ENCODE measurements at regions of chr1 and their contacts with region 1.

Region 1: DNA sequence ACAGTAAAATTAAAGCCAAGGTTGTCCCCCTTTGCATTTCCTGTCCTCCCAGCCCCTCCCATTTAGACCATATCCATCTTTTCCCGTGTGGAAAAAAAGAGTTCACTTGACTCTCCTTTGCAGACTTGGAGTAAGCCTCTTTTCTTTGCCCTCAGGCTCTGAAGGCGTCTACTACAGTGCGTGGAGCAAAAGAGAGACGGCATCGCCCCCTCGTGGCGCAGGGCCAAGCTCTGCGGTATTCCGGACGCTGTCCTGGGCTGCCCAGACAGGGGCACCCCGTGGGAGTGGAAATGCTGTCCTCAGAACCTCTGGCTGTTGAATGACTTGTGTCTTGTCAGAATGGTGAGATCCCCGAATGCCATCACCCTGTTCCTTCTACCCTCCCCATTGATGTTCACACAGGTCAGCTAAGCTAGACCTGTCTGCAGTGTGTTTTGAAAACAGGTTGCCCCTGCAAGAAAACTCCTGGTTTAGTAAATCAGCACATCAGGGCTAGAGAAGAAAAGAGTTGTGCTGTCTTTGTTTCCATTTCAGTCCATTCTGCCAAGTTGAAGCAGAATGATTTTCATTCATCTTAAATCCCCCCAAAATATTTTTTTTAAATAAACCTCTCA is 12.3 kb upstream of the GJA8 start:
- DNase-seq: peak; percentile 78
- H3K4me3 ChIP-seq: no peak overlapping the region
- H3K27ac ChIP-seq: no peak overlapping the region
- H3K4me1 ChIP-seq: no peaks in the 10 kb centered on the region
- H3K27me3 ChIP-seq: no peaks in the 10 kb centered on the region
- CTCF ChIP-seq: peak; percentile 86 to 89
- POLR2A ChIP-seq: no peak

Region 2: DNA sequence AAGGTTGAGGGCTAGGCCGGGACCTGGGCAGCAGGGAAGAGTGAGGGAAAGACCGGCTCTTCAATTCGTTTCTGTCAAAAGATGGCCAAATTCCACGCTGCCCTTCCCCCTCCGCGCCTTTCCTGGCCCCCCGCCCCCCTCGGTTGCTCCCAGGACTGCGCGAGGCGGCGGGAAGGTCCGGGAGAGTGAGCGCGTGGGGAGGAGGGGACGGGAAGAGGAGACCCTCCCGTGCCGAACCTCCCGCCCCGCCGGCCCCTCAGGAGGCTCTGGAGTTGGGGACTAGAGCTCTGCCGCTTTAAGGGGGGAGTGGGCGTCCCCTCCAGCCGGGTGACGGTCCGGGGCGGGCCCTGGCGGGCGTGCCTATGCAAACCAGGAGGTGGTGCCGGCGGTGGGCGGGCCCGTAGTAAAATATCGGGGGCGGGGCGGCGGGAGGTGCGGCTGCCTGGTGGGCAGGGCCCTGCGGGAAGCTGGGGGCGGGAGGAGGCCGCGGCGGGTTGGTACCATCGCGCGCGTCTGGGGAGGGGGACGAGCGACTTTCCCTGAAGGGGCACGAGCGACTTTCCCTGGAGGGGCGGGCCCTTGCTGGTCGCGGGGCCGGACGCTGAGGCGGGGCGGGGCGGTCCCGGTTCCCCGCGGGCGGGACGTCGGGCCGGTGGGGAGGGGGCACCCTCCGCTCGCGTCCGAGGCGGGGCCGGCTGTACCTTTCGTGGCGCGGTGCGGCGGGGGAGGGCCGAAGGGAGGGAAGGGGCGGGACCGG is 290.7 kb before region 1 on chr1:
- CTCF ChIA-PET with region 1: interaction called, 9 read pairs
- POLR2A ChIA-PET with region 1: no interaction called
- dilution Hi-C with region 1: no loop called
- intact Hi-C with region 1: loop called (anchors 1 kb)
- DNase-seq: peak; percentile 98
- H3K4me3 ChIP-seq: peak overlapping the region; percentile 76 to 91 (median 78)
- H3K27ac ChIP-seq: no peak overlapping the region
- H3K4me1 ChIP-seq: peaks cover 13% of the 10 kb centered on the region
- H3K27me3 ChIP-seq: peaks cover 3 to 4% of the 10 kb centered on the region in 2 experiments
- CTCF ChIP-seq: no peak
- POLR2A ChIP-seq: no peak

Region 3: DNA sequence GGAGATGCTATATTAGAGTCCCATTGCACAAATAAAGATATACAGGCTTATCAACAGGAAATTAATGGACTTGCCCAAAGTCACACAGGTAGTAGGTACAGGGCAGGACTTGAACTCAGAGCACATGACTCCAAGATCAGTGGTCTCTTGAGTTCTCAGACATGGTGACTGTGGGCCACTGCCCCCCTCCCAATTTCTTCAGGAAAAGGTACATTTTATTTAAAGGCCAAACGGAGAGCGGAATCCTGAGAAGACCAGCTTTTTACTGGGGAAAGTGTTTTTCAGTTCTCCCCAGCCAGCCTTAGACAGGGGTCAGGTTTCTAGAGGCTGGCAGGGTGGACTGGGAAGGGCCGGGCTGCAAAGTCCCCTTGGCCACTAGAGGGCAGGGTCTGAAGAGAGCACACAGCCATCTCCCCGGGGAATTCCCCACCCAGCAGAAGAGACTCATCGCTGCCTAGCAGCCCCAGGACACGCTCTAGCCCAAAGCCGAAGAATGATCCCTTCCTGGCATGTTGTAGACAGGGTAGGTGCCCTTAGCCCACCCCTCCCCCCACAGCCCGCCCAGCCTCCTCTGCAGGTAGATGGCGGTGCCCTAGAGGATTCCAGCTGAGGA is 249.6 kb before region 1 on chr1:
- CTCF ChIA-PET with region 1: interaction called, 68 read pairs
- POLR2A ChIA-PET with region 1: no interaction called
- dilution Hi-C with region 1: no loop called
- intact Hi-C with region 1: loop called (anchors 1 kb)
- DNase-seq: peak; percentile 60
- H3K4me3 ChIP-seq: no peak overlapping the region
- H3K27ac ChIP-seq: no peak overlapping the region
- H3K4me1 ChIP-seq: no peaks in the 10 kb centered on the region
- H3K27me3 ChIP-seq: no peaks in the 10 kb centered on the region
- CTCF ChIP-seq: peak; percentile 94 to 96
- POLR2A ChIP-seq: no peak

Region 4: GRCh38 chr1:147717063-147717565 is 173.2 kb before region 1 on chr1:
- CTCF ChIA-PET with region 1: interaction called, 273 read pairs
- POLR2A ChIA-PET with region 1: no interaction called
- dilution Hi-C with region 1: no loop called
- intact Hi-C with region 1: no loop called
- DNase-seq: no peak
- H3K4me3 ChIP-seq: no peak overlapping the region
- H3K27ac ChIP-seq: no peak overlapping the region
- H3K4me1 ChIP-seq: no peaks in the 10 kb centered on the region
- H3K27me3 ChIP-seq: peaks cover 17 to 18% of the 10 kb centered on the region in 2 experiments
- CTCF ChIP-seq: no peak
- POLR2A ChIP-seq: no peak

Region 5: DNA sequence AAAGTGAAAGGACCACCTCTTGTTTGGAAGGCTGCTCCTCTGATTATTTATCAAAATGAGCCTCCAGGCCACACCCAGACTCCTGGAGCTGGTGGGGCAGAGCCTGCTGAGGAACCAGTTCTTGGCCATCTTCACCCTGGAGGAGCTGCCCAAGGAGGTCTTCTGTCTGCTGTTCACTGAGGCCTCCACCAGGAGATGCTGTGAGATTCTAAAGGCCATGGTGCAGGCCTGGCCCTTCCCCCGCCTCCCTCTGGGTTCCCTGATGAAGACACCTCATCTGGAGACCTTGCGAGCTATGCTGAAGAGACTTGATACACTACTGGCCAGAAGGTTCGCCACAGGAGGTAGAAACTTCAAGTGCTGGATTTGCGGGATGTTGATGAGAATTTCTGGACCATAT is 49.4 kb before region 1 on chr1:
- CTCF ChIA-PET with region 1: interaction called, 32 read pairs
- POLR2A ChIA-PET with region 1: no interaction called
- dilution Hi-C with region 1: no loop called
- intact Hi-C with region 1: loop called (anchors 1 kb)
- DNase-seq: peak; percentile 11
- H3K4me3 ChIP-seq: no peak overlapping the region
- H3K27ac ChIP-seq: no peak overlapping the region
- H3K4me1 ChIP-seq: no peaks in the 10 kb centered on the region
- H3K27me3 ChIP-seq: no peaks in the 10 kb centered on the region
- CTCF ChIP-seq: peak; percentile 25 to 45
- POLR2A ChIP-seq: no peak

Region 6: GRCh38 chr1:147902183-147902845 is 12.0 kb after region 1 on chr1 and contains the start of gene GJA8:
- CTCF ChIA-PET with region 1: interaction called, 27 read pairs
- POLR2A ChIA-PET with region 1: interaction called, 3 read pairs
- dilution Hi-C with region 1: no loop called
- intact Hi-C with region 1: no loop called
- DNase-seq: no peak
- H3K4me3 ChIP-seq: no peak within 1 kb of the TSS
- H3K27ac ChIP-seq: no peak within 1 kb of the TSS
- H3K4me1 ChIP-seq: no peaks in the 10 kb centered on the region
- H3K27me3 ChIP-seq: peaks cover 8 to 12% of the 10 kb centered on the region in 2 experiments
- CTCF ChIP-seq: no peak
- POLR2A ChIP-seq: no peak
- total RNA-seq, gene GJA8: not detected in 2 replicates